WTC11 (cell line): ENCODE measurements at regions of chr3 and their contacts with region 1.

Region 1: GRCh38 chr3:50542177-50543034 is 25.1 kb downstream of the C3orf18 start:
- DNase-seq: peak; percentile 87
- ATAC-seq: peak; percentile 67
- H3K4me3 Mint-ChIP-seq: no peak overlapping the region
- H3K27ac Mint-ChIP-seq: no peak overlapping the region
- H3K4me1 Mint-ChIP-seq: peaks cover 22% of the 10 kb centered on the region
- H3K27me3 Mint-ChIP-seq: no peaks in the 10 kb centered on the region; the same call in 1 of the 2 replicates
- CTCF ChIP-seq: peak; percentile 88

Region 2: DNA sequence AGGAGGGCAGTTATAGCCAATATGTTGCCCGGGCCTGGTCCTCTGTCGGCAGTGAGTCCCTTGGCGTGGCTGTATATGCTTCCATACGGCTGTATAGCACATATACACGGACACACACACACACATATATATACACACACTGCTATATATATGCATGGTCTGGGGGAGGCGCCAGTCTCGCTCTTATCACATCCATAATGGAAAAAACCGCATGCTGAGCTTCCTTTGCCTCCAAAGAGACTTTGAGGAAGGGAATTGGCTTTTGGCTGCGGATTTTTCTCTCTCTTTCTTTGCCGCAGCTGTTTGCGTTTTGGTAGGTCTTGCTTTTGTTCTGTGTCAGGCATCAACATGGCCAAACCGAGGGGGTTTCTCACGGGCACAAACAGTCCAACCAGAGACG is 171.8 kb before region 1 on chr3:
- CTCF ChIA-PET with region 1: interaction called, 11 read pairs
- POLR2A ChIA-PET with region 1: no interaction called
- DNase-seq: no peak
- ATAC-seq: no peak
- H3K4me3 Mint-ChIP-seq: no peak overlapping the region
- H3K27ac Mint-ChIP-seq: peak overlapping the region; percentile 77; the same call in 1 of the 2 replicates
- H3K4me1 Mint-ChIP-seq: peaks cover 30% of the 10 kb centered on the region
- H3K27me3 Mint-ChIP-seq: peaks cover 5% of the 10 kb centered on the region; the same call in 1 of the 2 replicates
- CTCF ChIP-seq: no peak

Region 3: DNA sequence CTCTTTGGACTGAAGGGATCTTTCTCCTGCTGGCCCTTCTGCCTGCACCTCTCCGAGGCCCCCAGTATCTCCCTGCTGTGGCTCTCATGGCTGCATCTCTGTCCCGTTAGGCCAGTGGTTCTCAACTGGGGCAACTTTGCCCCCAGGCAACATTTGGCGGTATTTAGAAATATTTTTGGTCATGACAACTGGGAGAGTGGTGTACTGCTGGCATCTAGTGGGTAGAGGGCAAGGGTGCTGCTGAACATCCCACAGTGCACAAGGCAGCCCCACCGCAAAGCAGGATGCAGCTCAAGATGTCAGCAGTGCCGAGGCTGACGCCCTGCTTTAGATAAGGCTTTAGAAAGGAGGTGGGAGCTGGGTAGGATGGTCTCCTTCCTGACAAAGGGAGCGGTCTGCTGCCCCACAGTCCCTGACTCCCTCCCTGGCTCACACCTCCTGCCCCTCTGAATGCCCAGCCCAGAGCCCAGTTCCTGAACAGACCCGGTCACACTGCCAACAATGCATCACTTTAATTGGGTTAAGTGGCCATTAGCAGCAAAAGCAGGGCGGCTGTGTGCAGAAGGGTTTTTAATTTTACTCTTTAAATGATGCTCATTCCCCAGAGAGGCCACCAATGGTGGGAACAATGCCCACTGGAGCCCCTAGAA is 114.3 kb before region 1 on chr3:
- CTCF ChIA-PET with region 1: interaction called, 18 read pairs
- POLR2A ChIA-PET with region 1: no interaction called
- DNase-seq: no peak
- ATAC-seq: no peak
- H3K4me3 Mint-ChIP-seq: no peak overlapping the region
- H3K27ac Mint-ChIP-seq: peak overlapping the region; percentile 51; the same call in 1 of the 2 replicates
- H3K4me1 Mint-ChIP-seq: no peaks in the 10 kb centered on the region; the same call in 1 of the 2 replicates
- H3K27me3 Mint-ChIP-seq: no peaks in the 10 kb centered on the region
- CTCF ChIP-seq: no peak

Region 4: GRCh38 chr3:50466177-50466576 is 76.2 kb before region 1 on chr3:
- CTCF ChIA-PET with region 1: interaction called, 10 read pairs
- POLR2A ChIA-PET with region 1: no interaction called
- DNase-seq: no peak
- ATAC-seq: peak; percentile 38
- H3K4me3 Mint-ChIP-seq: no peak overlapping the region
- H3K27ac Mint-ChIP-seq: no peak overlapping the region
- H3K4me1 Mint-ChIP-seq: peaks cover 13% of the 10 kb centered on the region
- H3K27me3 Mint-ChIP-seq: no peaks in the 10 kb centered on the region
- CTCF ChIP-seq: no peak

Region 5: GRCh38 chr3:50509715-50510114 is 32.7 kb before region 1 on chr3:
- CTCF ChIA-PET with region 1: interaction called, 42 read pairs
- POLR2A ChIA-PET with region 1: no interaction called
- DNase-seq: no peak
- ATAC-seq: peak; percentile 69
- H3K4me3 Mint-ChIP-seq: no peak overlapping the region
- H3K27ac Mint-ChIP-seq: no peak overlapping the region
- H3K4me1 Mint-ChIP-seq: peaks cover 5% of the 10 kb centered on the region
- H3K27me3 Mint-ChIP-seq: peaks cover 12% of the 10 kb centered on the region
- CTCF ChIP-seq: no peak

Region 6: GRCh38 chr3:50520849-50521248 is 21.6 kb before region 1 on chr3:
- CTCF ChIA-PET with region 1: interaction called, 42 read pairs
- POLR2A ChIA-PET with region 1: interaction called, 4 read pairs
- DNase-seq: no peak
- ATAC-seq: no peak; the same call in 1 of the 2 replicates
- H3K4me3 Mint-ChIP-seq: no peak overlapping the region
- H3K27ac Mint-ChIP-seq: peak overlapping the region; percentile 7; the same call in 1 of the 2 replicates
- H3K4me1 Mint-ChIP-seq: peaks cover 79% of the 10 kb centered on the region
- H3K27me3 Mint-ChIP-seq: peaks cover 12% of the 10 kb centered on the region
- CTCF ChIP-seq: no peak

Region 7: GRCh38 chr3:50674349-50675178 is 132.2 kb after region 1 on chr3 and contains the start of gene DOCK3:
- CTCF ChIA-PET with region 1: no interaction called
- POLR2A ChIA-PET with region 1: no interaction called
- DNase-seq: peak; percentile 55
- ATAC-seq: peak; percentile 59
- H3K4me3 Mint-ChIP-seq: peak within 1 kb of the TSS; percentile 76
- H3K27ac Mint-ChIP-seq: no peak within 1 kb of the TSS
- H3K4me1 Mint-ChIP-seq: peaks cover 29% of the 10 kb centered on the region
- H3K27me3 Mint-ChIP-seq: peaks cover 33% of the 10 kb centered on the region
- CTCF ChIP-seq: no peak
- total RNA-seq, gene DOCK3: 5.2 to 5.6 TPM (median 5.5 TPM) in 3 replicates